PC-9 (cell line): ENCODE measurements at regions of chr2 and their contacts with region 1.

Region 1: DNA sequence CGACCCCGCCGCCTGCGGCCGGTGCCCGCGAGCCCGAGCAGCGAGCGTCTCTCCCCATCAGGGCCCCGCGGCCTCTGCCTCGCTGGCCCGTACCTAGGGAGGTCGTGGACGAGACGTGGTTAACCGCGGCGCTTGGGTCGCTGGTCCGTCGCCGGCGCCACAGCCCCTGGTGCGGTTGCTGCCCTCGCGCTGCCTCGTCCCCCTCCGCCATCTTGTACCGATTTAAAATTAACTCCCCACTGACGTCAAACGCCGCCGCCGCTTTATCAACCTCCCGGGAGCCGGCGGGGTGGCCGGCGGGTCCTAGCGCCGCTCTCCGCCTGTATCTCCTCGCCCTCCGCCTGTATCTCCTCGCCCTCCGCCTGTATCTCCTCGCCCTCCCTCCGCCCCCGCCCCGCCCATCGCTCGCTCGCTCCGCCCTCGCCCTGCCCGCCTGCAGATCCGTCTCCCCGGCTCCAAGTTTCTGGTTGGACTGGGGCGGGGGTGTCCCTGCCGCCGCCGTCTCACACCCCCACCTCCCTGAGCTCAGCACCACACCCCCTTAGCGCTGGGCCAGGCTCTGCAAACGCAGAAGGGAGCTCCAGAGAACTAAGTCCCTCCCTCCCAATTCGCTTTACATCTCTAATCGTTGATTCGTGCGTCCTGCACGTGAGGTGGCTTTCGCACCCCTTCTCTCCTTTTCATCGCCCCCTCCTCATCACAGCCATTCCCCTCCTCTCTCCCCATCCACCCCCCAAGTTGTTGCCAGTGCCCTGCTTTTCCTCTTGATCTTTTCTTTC is at the start of gene ATL2:
- DNase-seq: peak; percentile 86 to 92
- H3K4me3 ChIP-seq: peak within 1 kb of the TSS; percentile 69
- H3K27ac ChIP-seq: peak within 1 kb of the TSS; percentile 78
- H3K4me1 ChIP-seq: peaks cover 28% of the 10 kb centered on the region
- H3K27me3 ChIP-seq: no peaks in the 10 kb centered on the region
- CTCF ChIP-seq: 0 out of 2 replicates have a peak, but pooled peaks have one; percentile 10
- total RNA-seq, gene ATL2: 66.4 and 75.3 TPM in 2 replicates

Region 2: DNA sequence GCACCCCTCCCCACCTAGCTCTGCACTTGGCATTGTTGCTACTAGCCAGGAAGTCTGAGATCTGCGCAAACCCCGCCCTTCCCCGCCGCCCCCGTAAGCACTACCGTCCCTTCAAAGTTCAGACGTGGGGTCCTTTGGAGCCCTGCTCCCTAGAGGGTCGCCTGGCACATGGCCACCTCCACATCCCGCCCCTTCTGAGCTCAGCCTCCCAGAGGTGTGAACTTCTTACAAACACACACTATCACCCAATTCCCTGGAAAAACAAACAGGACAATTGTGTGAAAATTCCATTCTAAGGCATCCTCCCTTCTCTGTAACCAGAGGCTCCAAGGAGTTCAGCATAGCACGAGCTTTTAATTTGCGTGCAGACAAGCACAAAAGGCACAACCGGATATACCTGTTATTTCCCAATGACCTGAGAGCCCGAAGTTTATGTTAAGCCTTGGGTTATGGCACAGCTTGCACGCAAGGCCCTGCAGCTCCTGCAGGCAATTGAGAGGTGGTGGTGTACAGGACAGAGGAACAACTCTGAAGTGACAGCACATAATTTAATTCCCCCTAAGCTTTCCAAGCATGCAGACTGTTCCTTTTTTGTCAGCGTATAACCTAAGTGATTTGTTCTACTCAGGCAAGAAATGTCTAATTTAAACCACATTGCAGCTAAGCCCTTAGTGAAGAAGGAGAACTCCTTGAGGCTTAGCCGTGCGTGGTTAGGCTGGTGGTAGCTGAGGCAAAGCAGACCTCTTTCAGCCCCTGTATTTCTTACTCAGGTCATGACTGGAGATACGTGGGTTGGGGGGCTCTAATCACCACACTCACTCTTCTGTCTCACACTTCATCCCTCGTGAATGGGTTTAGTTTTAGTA is 281.0 kb before region 1 on chr2:
- CTCF ChIA-PET with region 1: no interaction called
- POLR2A ChIA-PET with region 1: no interaction called
- intact Hi-C with region 1: loop called (anchors 10 kb)
- DNase-seq: peak; percentile 77 to 100
- H3K4me3 ChIP-seq: peak overlapping the region; percentile 24; the same call in 1 of the 2 replicates
- H3K27ac ChIP-seq: peak overlapping the region; percentile 97
- H3K4me1 ChIP-seq: peaks cover 88% of the 10 kb centered on the region
- H3K27me3 ChIP-seq: no peaks in the 10 kb centered on the region
- CTCF ChIP-seq: no peak; the same call in 1 of the 2 replicates

Region 3: DNA sequence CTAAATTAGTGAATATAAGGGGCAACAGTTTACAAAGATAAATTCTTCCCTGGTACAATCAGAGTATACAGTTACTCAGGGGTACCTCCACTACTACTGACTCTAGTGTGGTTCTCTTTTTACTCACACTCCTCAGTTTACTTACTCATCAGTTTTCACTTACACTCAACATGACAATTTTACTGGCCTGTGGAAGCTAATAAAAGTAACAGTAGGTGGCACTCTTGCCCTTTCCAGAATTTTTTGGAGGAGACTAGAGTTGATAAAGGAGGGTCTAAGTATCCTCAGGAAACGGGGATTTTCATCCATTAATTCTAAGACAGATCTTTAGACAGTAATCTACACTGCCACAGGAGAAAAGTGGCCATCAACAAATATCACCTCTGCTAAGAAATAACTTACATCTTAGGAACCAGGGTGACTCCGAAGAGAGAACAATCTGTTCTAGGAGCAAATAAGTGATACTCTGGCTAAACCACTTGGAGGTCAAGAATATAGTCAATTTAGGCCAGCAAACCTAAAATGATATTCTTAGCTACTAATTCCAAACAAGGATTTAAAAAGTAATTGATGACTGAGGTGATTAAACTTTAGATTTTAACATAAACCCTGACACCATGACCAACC is 61.4 kb before region 1 on chr2:
- CTCF ChIA-PET with region 1: no interaction called
- POLR2A ChIA-PET with region 1: no interaction called
- intact Hi-C with region 1: loop called (anchors 5 kb)
- DNase-seq: peak; percentile 23 to 55
- H3K4me3 ChIP-seq: no peak overlapping the region
- H3K27ac ChIP-seq: 0 out of 2 replicates have a peak overlapping the region, but pooled peaks have one; percentile 1
- H3K4me1 ChIP-seq: no peaks in the 10 kb centered on the region
- H3K27me3 ChIP-seq: no peaks in the 10 kb centered on the region
- CTCF ChIP-seq: peak; percentile 90

Region 4: DNA sequence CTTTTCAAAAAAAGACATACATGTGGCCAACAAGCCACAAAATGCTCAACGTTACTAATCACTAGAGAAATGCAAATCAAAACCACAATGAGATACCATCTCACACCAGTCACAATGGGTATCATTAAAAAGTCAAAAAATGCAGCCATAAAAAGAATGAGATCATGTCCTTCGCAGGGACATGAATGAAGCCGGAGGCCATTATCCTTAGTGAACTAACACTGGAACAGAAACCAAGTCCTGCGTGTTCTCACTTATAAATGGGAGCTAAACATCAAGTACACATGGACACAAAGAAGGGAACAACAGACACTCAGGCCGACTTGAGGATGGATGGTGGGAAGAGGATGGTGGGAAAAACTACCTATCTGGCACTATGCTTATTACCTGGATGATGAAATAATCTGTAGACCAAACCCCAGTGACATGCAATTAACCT is 17.7 kb after region 1 on chr2:
- CTCF ChIA-PET with region 1: interaction called, 6 read pairs
- POLR2A ChIA-PET with region 1: no interaction called
- intact Hi-C with region 1: loop called (anchors 1 kb)
- DNase-seq: peak; percentile 37 to 96
- H3K4me3 ChIP-seq: no peak overlapping the region; the same call in 1 of the 2 replicates
- H3K27ac ChIP-seq: peak overlapping the region; percentile 81
- H3K4me1 ChIP-seq: peaks cover 33% of the 10 kb centered on the region
- H3K27me3 ChIP-seq: no peaks in the 10 kb centered on the region
- CTCF ChIP-seq: no peak

Region 5: GRCh38 chr2:38465789-38466127 is 88.5 kb after region 1 on chr2:
- CTCF ChIA-PET with region 1: interaction called, 11 read pairs
- POLR2A ChIA-PET with region 1: interaction called, 4 read pairs
- intact Hi-C with region 1: loop called (anchors 1 kb)
- DNase-seq: peak in 1 of 2 experiments; percentile 32
- H3K4me3 ChIP-seq: no peak overlapping the region
- H3K27ac ChIP-seq: no peak overlapping the region
- H3K4me1 ChIP-seq: peaks cover 28% of the 10 kb centered on the region
- H3K27me3 ChIP-seq: no peaks in the 10 kb centered on the region
- CTCF ChIP-seq: peak; percentile 79